ENCODE measurements at regions of chr9 and their contacts with region 1.

Region 1: GRCh38 chr9:99221621-99222415 is at the starts of genes ALG2 and SEC61B:
- DNase-seq: peak; percentile 96
- H3K4me3 ChIP-seq: peak within 1 kb of the TSS; percentile 84 to 100 (median 90)
- H3K27ac ChIP-seq: peak within 1 kb of the TSS; percentile 91 to 96 (median 94)
- H3K4me1 ChIP-seq: peaks cover 0 to 69% (median 49%) of the 10 kb centered on the region in 4 donors
- H3K27me3 ChIP-seq: no peaks in the 10 kb centered on the region
- CTCF ChIP-seq: no peak
- EP300 ChIP-seq: peak in 1 of 4 donors; percentile 34
- POLR2A ChIP-seq: peak; percentile 82 to 93
- total RNA-seq, gene ALG2: 15.1 to 25.0 (median 18.8) TPM
- total RNA-seq, gene SEC61B: 37.1 to 70.3 (median 49.9) TPM

Region 2: GRCh38 chr9:98807070-98807810 is 414.6 kb before region 1 on chr9 and contains the start of gene GALNT12:
- intact Hi-C with region 1: loop called (anchors 5 kb)
- DNase-seq: peak; percentile 71
- H3K4me3 ChIP-seq: peak within 1 kb of the TSS; percentile 42 to 64 (median 62)
- H3K27ac ChIP-seq: peak within 1 kb of the TSS; percentile 83 to 90 (median 86)
- H3K4me1 ChIP-seq: peaks cover 0 to 68% (median 51%) of the 10 kb centered on the region in 4 donors
- H3K27me3 ChIP-seq: no peaks in the 10 kb centered on the region
- CTCF ChIP-seq: no peak
- EP300 ChIP-seq: no peak
- POLR2A ChIP-seq: no peak
- total RNA-seq, gene GALNT12: 11.5 to 18.9 (median 15.7) TPM

Region 3: DNA sequence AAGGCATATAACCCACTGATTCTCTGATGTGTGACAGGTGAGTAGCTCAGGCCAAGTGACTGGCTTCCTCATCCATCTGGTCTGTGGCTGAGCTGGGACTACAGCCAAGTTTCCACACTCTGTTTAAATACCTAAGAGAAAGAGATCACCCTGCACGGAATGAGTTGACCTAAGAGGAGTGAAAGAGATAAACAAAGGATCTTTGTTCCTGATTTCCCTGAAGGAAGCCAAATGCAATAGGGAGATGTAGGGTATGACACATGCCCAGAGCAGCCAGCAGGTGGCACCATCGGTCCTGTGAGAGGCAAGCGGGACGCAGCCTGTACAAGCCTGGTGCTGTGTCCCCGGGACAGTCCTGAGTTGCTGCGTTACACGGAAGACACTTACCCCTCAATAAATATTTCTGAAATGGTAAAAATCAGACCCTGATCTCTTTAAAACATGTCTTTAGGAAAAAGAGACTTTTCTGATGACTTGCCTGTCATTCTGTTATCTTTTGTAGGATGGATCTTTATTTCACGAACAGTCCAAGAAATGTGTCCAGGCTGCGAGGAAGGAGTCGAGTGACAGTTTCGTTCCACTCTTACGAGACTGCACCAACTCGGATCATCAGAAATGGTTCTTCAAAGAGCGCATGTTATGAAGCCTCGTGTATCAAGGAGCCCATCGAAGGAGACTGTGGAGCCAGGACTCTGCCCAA is 373.2 kb before region 1 on chr9:
- intact Hi-C with region 1: loop called (anchors 5 kb)
- DNase-seq: peak; percentile 97
- H3K4me3 ChIP-seq: peak overlapping the region; percentile 13 to 27 (median 24)
- H3K27ac ChIP-seq: peak overlapping the region; percentile 72 to 84 (median 79)
- H3K4me1 ChIP-seq: peaks cover 0 to 47% (median 37%) of the 10 kb centered on the region in 4 donors
- H3K27me3 ChIP-seq: no peaks in the 10 kb centered on the region
- CTCF ChIP-seq: peak; percentile 87 to 94 (median 90)
- EP300 ChIP-seq: peak in 1 of 4 donors; percentile 1
- POLR2A ChIP-seq: no peak

Region 4: DNA sequence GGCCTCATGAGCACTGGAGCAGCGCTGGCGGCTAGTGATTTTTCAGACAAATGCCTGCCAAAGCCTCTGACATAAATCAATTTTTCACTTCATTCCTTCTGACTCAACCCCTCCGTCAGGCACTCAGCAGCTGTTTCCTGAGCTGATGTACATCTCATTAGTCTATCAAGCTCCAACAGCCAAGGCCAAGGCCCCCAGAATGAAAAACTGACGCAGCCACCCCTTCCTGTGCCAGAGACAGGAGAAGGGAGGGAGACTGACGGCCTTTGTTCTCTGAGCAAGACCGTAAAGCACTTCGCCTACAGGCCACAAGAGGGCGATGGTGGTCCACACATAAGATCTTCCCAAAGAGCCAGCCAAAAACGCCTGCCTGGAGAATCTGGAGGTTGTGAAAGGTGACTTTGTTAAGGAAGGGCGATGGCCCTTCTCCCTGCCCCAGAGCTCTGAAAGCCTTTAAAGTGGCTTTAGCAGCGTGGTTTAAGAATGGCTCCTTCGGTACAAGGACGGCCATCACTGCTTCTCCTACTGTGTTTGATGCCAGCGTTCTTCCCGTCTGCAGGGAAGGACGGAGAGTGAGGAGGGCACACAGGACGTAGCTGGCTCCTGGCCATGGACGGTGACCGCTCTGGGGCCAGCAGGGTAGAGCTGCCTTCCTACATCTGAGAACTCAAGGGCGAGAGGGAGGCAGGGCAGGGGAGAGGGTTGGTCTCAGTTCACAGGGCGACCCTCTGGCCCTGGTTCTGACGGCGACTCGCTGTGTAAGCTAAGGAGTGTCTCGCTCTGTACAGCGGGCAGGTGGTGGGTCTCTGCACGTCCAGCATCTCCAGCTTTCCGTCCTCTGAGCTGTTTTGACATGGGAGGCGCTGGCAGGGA is 37.1 kb before region 1 on chr9:
- intact Hi-C with region 1: loop called (anchors 2 kb)
- DNase-seq: peak; percentile 93
- H3K4me3 ChIP-seq: peak overlapping the region in 3 of 4 donors; percentile 31 to 40 (median 32)
- H3K27ac ChIP-seq: no peak overlapping the region
- H3K4me1 ChIP-seq: peaks cover 0 to 8% (median 7%) of the 10 kb centered on the region in 4 donors
- H3K27me3 ChIP-seq: no peaks in the 10 kb centered on the region
- CTCF ChIP-seq: peak; percentile 77 to 93 (median 84)
- EP300 ChIP-seq: no peak
- POLR2A ChIP-seq: no peak

Region 5: DNA sequence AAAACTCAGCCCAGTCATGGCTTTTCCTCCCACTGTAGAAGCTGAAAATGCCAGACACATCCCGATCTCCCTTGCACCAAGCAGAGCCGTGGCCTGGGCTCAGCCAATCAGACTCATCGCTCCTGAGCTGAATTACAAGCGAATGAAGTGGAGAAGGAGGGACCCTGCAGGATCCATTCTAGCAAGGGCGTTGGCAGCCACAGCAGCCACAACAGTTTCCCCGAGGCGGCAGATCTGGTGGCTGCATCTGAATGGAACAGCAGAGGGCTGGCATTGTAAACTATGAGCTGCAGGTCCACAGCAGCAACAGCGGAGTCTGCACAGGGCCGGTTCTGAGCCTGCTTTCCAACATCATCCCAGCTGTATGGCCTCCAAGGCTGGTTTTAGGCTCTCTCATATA is 23.8 kb before region 1 on chr9:
- intact Hi-C with region 1: no loop called
- DNase-seq: no peak
- H3K4me3 ChIP-seq: no peak overlapping the region
- H3K27ac ChIP-seq: no peak overlapping the region
- H3K4me1 ChIP-seq: no peaks in the 10 kb centered on the region
- H3K27me3 ChIP-seq: no peaks in the 10 kb centered on the region
- CTCF ChIP-seq: no peak
- EP300 ChIP-seq: no peak
- POLR2A ChIP-seq: no peak

Region 6: GRCh38 chr9:99259231-99259918 is 37.6 kb after region 1 on chr9:
- intact Hi-C with region 1: loop called (anchors 2 kb)
- DNase-seq: peak; percentile 93
- H3K4me3 ChIP-seq: peak overlapping the region; percentile 30 to 52 (median 46)
- H3K27ac ChIP-seq: peak overlapping the region; percentile 75 to 79 (median 76)
- H3K4me1 ChIP-seq: peaks cover 0 to 30% (median 14%) of the 10 kb centered on the region in 4 donors
- H3K27me3 ChIP-seq: no peaks in the 10 kb centered on the region
- CTCF ChIP-seq: no peak
- EP300 ChIP-seq: peak in 1 of 4 donors; percentile 85
- POLR2A ChIP-seq: no peak

Region 7: DNA sequence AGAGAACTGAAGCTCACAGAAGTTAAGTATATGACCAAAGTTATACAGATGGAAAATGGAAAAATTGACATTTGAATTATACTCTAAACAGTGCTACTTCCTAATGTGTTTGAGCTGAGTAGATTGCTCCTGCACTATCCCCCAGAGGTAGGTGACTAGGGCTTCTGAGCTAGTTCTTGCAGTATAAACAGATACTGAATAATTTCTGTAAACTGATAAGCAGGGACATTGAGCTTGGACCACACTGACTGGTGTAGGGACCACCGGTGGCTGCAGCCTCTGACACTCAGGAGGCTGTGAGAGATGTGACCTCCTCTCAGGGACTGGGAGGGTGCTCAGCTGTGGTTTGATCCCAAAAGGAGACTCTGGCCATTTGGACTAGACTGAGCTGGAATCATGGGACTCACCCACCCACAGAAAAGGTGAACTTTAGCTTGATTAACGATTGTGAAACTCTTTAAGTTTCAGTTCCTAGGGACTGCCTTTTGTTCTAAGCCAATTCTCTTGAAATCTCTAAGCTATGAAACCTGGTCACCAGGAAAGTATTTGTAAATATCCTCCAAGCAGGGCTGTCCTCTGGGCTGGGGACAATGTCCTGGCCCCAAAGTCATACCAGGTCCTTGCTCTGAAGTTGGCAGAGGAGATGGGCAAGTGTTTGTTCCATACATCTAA is 291.8 kb after region 1 on chr9:
- intact Hi-C with region 1: no loop called
- DNase-seq: no peak
- H3K4me3 ChIP-seq: no peak overlapping the region
- H3K27ac ChIP-seq: no peak overlapping the region
- H3K4me1 ChIP-seq: peaks cover 0 to 3% (median 0%) of the 10 kb centered on the region in 4 donors
- H3K27me3 ChIP-seq: no peaks in the 10 kb centered on the region
- CTCF ChIP-seq: no peak
- EP300 ChIP-seq: no peak
- POLR2A ChIP-seq: no peak

Region 8: GRCh38 chr9:99906403-99907207 is 684.8 kb after region 1 on chr9 and contains the start of gene STX17:
- intact Hi-C with region 1: loop called (anchors 5 kb)
- DNase-seq: peak; percentile 81
- H3K4me3 ChIP-seq: peak within 1 kb of the TSS; percentile 79 to 94 (median 81)
- H3K27ac ChIP-seq: peak within 1 kb of the TSS; percentile 95 to 99 (median 96)
- H3K4me1 ChIP-seq: peaks cover 0 to 25% (median 14%) of the 10 kb centered on the region in 4 donors
- H3K27me3 ChIP-seq: no peaks in the 10 kb centered on the region
- CTCF ChIP-seq: no peak
- EP300 ChIP-seq: no peak
- POLR2A ChIP-seq: peak; percentile 62 to 69
- total RNA-seq, gene STX17: 33.4 to 63.7 (median 39.6) TPM

Measured in sigmoid colon (tissue), 7 donors.